Left ventricle myocardium inferior (tissue), 1 donor: ENCODE measurements at regions of chr15 and their contacts with region 1.

Region 1: GRCh38 chr15:45790325-45790943 is 155.6 kb downstream of the SQOR start:
- DNase-seq: peak; percentile 17
- H3K4me3 ChIP-seq: no peak overlapping the region
- H3K27ac ChIP-seq: no peak overlapping the region
- H3K4me1 ChIP-seq: no peaks in the 10 kb centered on the region
- H3K27me3 ChIP-seq: peaks cover 35% of the 10 kb centered on the region
- CTCF ChIP-seq: peak; percentile 78

Region 2: DNA sequence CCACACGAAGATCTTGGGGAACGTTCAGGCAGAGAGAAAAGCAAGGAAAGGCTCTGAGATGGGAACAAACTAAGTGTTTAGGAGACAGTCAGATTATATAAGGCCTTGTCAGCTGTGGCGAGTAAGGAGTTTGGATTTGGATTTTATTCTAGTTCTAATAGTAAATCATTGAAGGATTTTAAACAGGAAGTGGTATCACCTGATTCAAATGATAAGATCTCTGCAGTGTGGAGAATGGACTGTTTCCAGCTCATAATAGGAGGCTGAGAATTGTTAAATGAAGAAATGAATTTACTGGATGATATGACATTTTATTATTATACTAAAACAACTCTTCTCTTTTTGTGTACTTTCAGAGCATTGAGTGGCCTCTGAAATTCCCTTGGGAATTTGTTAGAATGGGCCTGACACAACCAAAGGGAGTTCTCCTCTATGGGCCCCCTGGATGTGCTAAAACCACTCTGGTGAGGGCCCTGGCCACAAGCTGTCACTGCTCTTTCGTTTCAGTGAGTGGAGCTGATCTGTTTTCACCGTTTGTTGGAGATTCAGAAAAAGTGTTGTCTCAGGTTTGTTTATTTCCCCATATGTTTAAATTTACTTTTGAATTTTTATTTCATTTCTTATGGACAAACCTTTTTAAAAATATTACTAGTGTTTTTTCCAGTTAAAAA is 376.1 kb before region 1 on chr15:
- intact Hi-C with region 1: no loop called
- DNase-seq: no peak
- H3K4me3 ChIP-seq: no peak overlapping the region
- H3K27ac ChIP-seq: no peak overlapping the region
- H3K4me1 ChIP-seq: peaks cover 6% of the 10 kb centered on the region
- H3K27me3 ChIP-seq: no peaks in the 10 kb centered on the region
- CTCF ChIP-seq: no peak

Region 3: DNA sequence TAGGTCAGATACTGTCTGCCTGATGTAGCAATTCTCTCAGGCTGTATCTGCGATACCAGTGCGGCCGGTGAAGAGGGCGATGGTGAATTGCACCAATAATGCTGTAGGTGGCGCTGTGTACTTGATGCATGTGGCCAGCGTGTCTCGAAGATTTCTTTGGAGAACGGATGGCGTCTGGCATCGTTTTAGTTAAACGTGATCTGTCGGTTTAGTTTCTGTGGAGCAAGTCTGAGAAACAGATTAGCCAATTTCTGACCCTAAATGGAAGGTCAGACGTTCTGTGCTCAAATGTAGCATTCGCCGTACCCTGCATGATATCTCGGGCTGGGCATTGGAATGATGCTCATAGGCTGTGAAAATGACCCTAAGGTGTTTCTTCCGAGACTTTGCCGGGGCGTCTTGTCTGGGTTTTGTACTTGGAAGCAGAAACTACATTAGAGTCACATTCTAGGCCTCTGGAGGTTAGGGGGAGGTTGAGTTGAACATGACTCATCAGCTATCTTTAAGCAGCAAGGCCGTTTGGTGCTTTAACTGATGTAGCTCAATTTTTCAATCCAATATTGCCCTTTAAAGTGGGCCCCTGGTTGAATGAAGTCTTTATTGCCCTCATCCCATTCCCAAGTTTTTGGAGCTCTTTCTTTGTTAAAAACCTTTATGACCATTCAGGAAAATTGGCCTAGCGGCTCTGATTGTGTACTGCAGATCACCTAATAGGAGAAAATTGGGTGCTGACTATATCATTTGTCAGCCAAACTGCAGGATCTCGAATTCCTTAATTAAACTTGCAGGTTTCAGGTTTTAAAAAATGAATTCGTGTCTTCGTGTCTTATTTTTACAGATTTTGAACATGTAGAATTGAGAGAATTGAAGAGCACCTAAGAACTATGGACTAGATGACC is 75.6 kb before region 1 on chr15:
- intact Hi-C with region 1: loop called (anchors 2 kb)
- DNase-seq: peak; percentile 49
- H3K4me3 ChIP-seq: peak overlapping the region; percentile 24
- H3K27ac ChIP-seq: no peak overlapping the region
- H3K4me1 ChIP-seq: peaks cover 14% of the 10 kb centered on the region
- H3K27me3 ChIP-seq: peaks cover 4% of the 10 kb centered on the region
- CTCF ChIP-seq: peak; percentile 94

Region 4: GRCh38 chr15:45842151-45842550 is 51.7 kb after region 1 on chr15:
- intact Hi-C with region 1: no loop called
- DNase-seq: no peak
- H3K4me3 ChIP-seq: no peak overlapping the region
- H3K27ac ChIP-seq: no peak overlapping the region
- H3K4me1 ChIP-seq: no peaks in the 10 kb centered on the region
- H3K27me3 ChIP-seq: peaks cover 17% of the 10 kb centered on the region
- CTCF ChIP-seq: no peak